Activated T-helper 1 cell treated with anti-CD3 and anti-CD28 coated beads, Interleukin-12 subunit alpha, Interleukin-12 subunit beta, Interleukin-2, Interleukin-4 antibody, amounts not matched to agents 30 ng/mL and 10 ng/mL and 1 ng/mL, durations not matched to agents 14 hours and 24 hours and 36 hours (primary cell): ENCODE measurements at regions of chr18 and their contacts with region 1.

Region 1: DNA sequence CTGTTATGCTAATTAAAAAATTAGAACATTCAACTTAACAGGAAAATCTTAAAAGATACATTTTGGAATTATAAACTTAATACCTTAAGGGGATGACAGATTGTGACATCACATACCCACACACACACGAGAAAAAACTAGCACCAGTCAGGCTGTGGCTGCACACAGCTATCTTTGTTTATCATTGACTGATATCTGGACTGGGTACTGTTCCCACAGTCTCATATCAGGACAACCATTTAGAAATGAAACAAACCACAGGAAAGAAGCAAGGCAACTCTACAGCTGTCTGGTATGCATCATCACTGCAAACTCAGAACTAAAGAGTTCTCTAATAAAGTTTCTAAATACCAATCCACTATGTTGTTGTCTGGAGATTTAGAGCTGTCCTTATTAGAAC is 210.9 kb upstream of the SMAD7 start:
- DNase-seq: peak; percentile 21
- H3K4me3 Mint-ChIP-seq: no peak overlapping the region
- H3K27ac Mint-ChIP-seq: peak overlapping the region; percentile 29
- H3K4me1 Mint-ChIP-seq: peaks cover 37% of the 10 kb centered on the region
- H3K27me3 Mint-ChIP-seq: no peaks in the 10 kb centered on the region

Region 2: GRCh38 chr18:48934723-48935432 is 226.7 kb before region 1 on chr18:
- intact Hi-C with region 1: loop called (anchors 5 kb)
- DNase-seq: no peak
- H3K4me3 Mint-ChIP-seq: peak overlapping the region; percentile 48
- H3K27ac Mint-ChIP-seq: peak overlapping the region; percentile 75
- H3K4me1 Mint-ChIP-seq: peaks cover 82% of the 10 kb centered on the region
- H3K27me3 Mint-ChIP-seq: no peaks in the 10 kb centered on the region

Region 3: GRCh38 chr18:49094979-49095632 is 66.5 kb before region 1 on chr18:
- intact Hi-C with region 1: loop called (anchors 5 kb)
- DNase-seq: no peak
- H3K4me3 Mint-ChIP-seq: no peak overlapping the region
- H3K27ac Mint-ChIP-seq: no peak overlapping the region
- H3K4me1 Mint-ChIP-seq: peaks cover 6% of the 10 kb centered on the region
- H3K27me3 Mint-ChIP-seq: no peaks in the 10 kb centered on the region

Region 4: GRCh38 chr18:49227441-49228165 is 66.0 kb after region 1 on chr18:
- intact Hi-C with region 1: loop called (anchors 1 kb)
- DNase-seq: peak; percentile 48
- H3K4me3 Mint-ChIP-seq: no peak overlapping the region
- H3K27ac Mint-ChIP-seq: no peak overlapping the region
- H3K4me1 Mint-ChIP-seq: peaks cover 14% of the 10 kb centered on the region
- H3K27me3 Mint-ChIP-seq: no peaks in the 10 kb centered on the region

Region 5: DNA sequence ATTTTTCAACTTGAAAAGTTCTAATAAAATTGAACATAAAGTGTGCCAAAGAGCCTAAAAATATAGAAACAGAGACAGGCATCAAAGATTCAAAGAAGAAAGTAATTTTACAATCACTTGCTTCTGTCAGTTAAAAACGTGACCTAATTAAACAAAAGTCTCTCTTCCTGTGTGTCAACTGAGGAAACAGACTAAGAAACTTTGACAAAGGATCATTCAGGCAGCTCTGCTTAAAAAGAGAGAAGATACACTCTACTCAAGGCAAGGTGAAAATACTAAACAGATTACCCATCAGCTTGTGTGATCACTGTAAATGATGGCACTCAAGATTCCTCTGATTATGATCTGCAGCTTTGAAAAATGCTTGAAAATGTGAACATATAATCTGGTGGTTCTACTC is 251.1 kb after region 1 on chr18:
- intact Hi-C with region 1: loop called (anchors 1 kb)
- DNase-seq: no peak
- H3K4me3 Mint-ChIP-seq: no peak overlapping the region
- H3K27ac Mint-ChIP-seq: peak overlapping the region; percentile 9
- H3K4me1 Mint-ChIP-seq: peaks cover 24% of the 10 kb centered on the region
- H3K27me3 Mint-ChIP-seq: no peaks in the 10 kb centered on the region